Panc1 (cell line): ENCODE measurements at regions of chr19 and their contacts with region 1.

Region 1: DNA sequence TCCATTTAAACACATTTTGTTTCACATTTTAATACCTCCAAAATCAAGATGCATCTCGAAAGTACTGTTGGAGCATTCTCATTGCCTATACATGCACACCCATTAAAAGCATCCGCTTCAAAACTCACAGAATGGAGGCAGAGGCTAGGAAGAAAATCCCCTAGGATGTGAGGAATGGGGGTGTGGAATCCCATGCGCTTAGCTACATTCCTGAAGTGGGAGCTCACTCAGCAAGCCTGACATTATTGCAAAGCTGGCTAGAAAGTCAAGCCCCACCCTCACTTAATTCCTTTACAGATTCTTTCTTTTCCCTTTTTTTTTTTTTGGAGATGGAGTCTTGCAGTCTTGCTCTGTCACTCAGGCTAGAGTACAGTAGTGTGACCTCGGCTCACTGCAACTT is 4.6 kb upstream of the FAM32A start:
- DNase-seq: no peak
- ATAC-seq: no peak
- H3K4me3 ChIP-seq: no peak overlapping the region
- H3K27ac ChIP-seq: no peak overlapping the region
- H3K4me1 ChIP-seq: no peaks in the 10 kb centered on the region; the same call in 1 of the 2 replicates
- H3K27me3 ChIP-seq: no peaks in the 10 kb centered on the region
- CTCF ChIP-seq: no peak

Region 2: GRCh38 chr19:16041299-16041990 is 139.2 kb before region 1 on chr19:
- CTCF ChIA-PET with region 1: interaction called, 8 read pairs
- POLR2A ChIA-PET with region 1: no interaction called
- in situ Hi-C with region 1: no loop called
- intact Hi-C with region 1: loop called (anchors 5 kb)
- DNase-seq: peak; percentile 46
- ATAC-seq: peak; percentile 96
- H3K4me3 ChIP-seq: 0 out of 4 replicates have a peak overlapping the region, but pooled peaks of 1 of the 2 experiments have one; percentile 10
- H3K27ac ChIP-seq: no peak overlapping the region
- H3K4me1 ChIP-seq: no peaks in the 10 kb centered on the region
- H3K27me3 ChIP-seq: no peaks in the 10 kb centered on the region
- CTCF ChIP-seq: peak; percentile 95

Region 3: DNA sequence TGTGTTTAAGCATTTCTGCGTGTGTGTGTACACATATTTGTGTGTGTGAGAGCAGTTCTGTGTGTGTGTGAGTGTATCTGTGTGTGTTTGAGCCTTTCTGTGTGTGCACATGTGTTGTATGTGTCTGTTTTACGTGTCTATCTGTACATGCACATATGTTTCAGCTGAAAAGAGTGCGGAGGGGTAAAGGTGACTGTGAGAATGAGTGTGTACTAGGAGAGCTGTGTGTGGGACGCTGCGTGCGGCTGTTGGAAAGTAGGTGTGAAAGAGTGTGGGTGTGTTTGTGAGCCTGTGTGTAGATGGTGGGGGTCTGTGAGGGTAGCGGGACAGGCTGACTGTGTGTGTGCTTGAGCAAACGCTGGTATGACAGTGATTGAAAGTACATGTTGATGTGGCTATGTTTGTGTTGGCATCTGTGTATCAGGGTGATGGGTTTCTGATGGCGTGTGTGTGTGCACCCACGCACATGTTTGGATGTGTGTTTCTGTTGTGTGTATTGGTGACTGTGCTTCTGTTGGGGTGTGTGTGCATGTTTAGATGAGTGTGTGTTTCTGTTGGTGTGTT is 111.8 kb before region 1 on chr19:
- CTCF ChIA-PET with region 1: interaction called, 6 read pairs
- POLR2A ChIA-PET with region 1: interaction called, 11 read pairs
- in situ Hi-C with region 1: no loop called
- intact Hi-C with region 1: no loop called
- DNase-seq: no peak
- ATAC-seq: no peak
- H3K4me3 ChIP-seq: peak overlapping the region in 1 of 2 experiments; percentile 59; a peak in 2 of 4 replicates
- H3K27ac ChIP-seq: no peak overlapping the region
- H3K4me1 ChIP-seq: peaks cover 8% of the 10 kb centered on the region
- H3K27me3 ChIP-seq: no peaks in the 10 kb centered on the region
- CTCF ChIP-seq: no peak

Region 4: GRCh38 chr19:16509141-16510061 is 328.8 kb after region 1 on chr19:
- CTCF ChIA-PET with region 1: no interaction called
- POLR2A ChIA-PET with region 1: no interaction called
- in situ Hi-C with region 1: no loop called
- intact Hi-C with region 1: no loop called
- DNase-seq: no peak
- ATAC-seq: no peak
- H3K4me3 ChIP-seq: no peak overlapping the region
- H3K27ac ChIP-seq: no peak overlapping the region
- H3K4me1 ChIP-seq: no peaks in the 10 kb centered on the region
- H3K27me3 ChIP-seq: no peaks in the 10 kb centered on the region
- CTCF ChIP-seq: no peak